Dendritic cell treated with granulocyte-macrophage colony-stimulating factor and Interleukin-4, amounts not matched to agents 40 ng/mL and 50 ng/mL, for 4 days (primary cell): ENCODE measurements at regions of chr1 and their contacts with region 1.

Region 1: DNA sequence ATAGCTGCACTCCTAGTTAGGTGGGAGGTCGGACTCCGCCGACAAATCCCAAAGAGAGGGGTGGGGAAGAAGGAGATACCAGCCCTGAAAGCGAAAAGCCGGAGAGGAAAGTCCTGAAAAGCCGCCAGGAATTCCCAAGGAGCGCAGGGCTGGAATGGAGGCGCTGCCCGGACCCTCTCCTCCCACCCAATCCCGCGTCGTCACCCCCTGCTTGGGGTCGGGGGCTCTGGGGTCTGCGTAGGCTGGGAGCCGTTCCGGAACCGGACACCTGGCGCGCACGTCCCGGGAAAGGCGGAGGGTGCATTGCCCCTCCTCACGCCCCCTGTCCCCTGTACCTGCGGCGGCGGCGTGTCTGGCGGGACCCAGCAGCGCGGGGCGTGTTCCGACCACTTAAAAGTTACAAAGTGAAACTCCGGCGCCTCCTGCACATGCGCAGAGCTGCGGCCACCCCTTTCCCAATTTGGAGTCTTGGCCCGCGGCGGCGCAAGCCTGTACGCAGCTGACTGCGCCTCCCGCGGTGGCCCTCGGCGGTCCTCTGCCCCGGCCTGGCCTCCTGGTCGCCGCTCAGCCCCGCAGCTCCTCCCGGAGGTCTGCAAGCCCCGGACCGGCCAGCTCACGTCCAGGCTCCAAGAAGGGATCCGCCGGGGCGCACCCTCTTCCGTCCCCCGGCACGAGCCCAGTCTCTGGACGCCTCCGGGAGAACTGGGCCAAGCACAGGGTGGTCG is at the start of gene TMEM63A:
- H3K4me3 Mint-ChIP-seq: peak within 1 kb of the TSS; percentile 95
- H3K27ac Mint-ChIP-seq: peak within 1 kb of the TSS; percentile 89
- H3K4me1 Mint-ChIP-seq: peaks cover 52% of the 10 kb centered on the region
- H3K27me3 Mint-ChIP-seq: peaks cover 15% of the 10 kb centered on the region

Region 2: DNA sequence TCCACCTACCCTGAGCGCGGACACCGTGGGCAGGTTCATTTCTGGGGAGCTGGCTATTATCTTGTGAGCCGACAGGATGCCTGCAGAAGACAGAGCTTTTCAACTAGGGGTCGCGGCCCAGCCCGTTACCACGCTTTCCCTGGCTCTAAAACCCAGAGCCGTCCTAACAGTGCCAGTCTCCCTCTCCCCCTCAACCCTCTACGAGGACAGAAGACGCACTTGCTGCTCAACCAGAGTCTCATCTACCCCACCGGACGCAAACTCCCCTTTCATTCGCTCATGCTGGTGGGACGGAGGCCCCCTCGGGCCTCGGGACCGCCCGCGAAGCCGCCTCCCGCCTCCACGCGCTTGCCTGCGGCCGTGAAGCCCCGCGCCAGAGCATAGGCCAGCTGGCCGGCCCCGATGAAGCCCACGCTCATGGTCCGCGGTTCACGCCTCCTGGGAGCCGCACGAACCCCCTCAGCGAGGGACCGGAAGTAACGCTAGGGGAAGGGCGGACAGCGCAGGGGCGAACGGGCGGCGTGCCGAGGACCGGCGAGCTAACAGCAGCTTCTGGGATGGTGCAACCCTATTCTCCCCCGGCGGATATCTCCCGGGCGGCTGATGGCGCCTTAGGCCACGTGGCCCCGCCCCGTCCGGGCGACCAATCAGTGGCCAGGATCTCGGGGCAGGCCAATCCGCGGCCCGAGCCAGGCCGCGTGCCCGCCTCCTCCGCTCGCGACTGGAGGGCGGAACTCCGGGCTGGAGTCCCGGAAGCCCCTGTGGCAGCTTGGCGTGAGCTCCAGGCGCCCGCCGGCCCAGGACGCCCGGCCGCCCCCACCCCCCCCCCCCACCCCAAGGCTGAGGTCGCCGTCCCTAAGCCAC is 41.8 kb after region 1 on chr1 and contains the start of gene PYCR2:
- intact Hi-C with region 1: loop called (anchors 2 kb)
- H3K4me3 Mint-ChIP-seq: peak within 1 kb of the TSS; percentile 85
- H3K27ac Mint-ChIP-seq: peak within 1 kb of the TSS; percentile 91
- H3K4me1 Mint-ChIP-seq: peaks cover 49% of the 10 kb centered on the region
- H3K27me3 Mint-ChIP-seq: no peaks in the 10 kb centered on the region

Region 3: DNA sequence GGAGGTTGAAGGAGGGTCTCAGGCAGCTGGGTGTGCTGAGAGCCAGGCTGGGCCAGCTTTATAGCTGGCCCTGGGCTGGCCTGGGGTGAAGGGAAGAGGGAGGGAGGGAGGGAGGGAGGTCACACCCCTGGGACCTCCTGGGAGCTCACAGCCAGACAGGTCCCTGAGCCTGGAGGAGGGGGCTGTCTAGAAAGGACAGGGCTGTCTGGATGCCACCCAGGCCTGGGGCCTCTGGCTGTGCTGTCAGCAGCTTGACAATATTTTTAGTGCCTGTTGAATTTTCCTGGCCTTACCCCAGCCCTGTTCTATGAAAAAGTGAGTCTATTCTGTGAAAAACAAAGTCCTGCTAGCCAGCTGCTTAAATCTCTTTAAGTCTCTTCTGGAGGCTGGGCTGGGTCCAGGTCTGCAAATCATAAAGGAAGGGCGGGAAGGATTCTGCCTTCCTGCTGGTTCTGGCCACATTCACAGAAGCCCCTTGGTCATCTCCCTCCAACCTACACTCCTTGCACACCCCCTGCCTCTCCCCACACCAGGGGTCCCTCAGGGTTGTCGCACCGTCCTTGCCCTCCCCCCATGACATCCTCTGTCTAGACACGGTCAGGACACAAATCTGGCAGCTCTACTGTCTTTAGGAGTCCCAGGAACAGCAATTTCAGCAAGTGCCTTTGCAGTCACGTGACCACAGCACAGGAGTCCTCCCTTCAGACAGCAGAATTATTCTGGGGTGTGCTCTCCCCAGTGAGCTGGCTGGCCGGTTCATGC is 59.2 kb after region 1 on chr1 and contains the start of gene LEFTY2:
- intact Hi-C with region 1: no loop called
- H3K4me3 Mint-ChIP-seq: no peak within 1 kb of the TSS
- H3K27ac Mint-ChIP-seq: no peak within 1 kb of the TSS
- H3K4me1 Mint-ChIP-seq: peaks cover 7% of the 10 kb centered on the region
- H3K27me3 Mint-ChIP-seq: peaks cover 23% of the 10 kb centered on the region